GM18951 (cell line): ENCODE measurements at regions of chr13 and their contacts with region 1.

Region 1: GRCh38 chr13:29362849-29363604 is 232.5 kb downstream of the SLC7A1 start:
- POLR2A ChIP-seq: no peak

Region 2: GRCh38 chr13:29077051-29077813 is 285.8 kb before region 1 on chr13:
- in situ Hi-C with region 1: loop called (anchors 10 kb)
- POLR2A ChIP-seq: no peak